B cell (primary cell): ENCODE measurements at regions of chr13 and their contacts with region 1.

Region 1: DNA sequence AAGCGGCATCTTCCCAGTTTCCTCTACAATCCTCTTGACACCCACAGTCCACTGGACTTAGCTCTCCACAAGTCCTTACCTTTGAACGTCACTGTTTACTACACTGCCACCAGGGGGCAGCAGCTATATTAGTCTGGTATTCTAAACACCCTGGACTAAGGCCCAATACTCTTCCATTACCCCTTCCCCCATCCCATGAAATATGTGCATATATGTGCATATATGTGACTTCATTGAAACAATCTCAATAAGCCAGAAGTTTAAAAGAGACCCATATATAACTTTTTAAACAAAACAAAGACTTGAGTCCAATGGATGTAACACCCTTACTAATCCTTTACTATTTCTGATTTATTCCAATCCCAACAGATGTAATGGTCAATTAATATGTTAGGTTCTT is 15.5 kb downstream of the GGACT start:
- DNase-seq: peak; percentile 77
- ATAC-seq: peak; percentile 73
- H3K4me3 ChIP-seq: no peak overlapping the region
- H3K4me3 Mint-ChIP-seq: no peak overlapping the region
- H3K27ac ChIP-seq: no peak overlapping the region
- H3K27ac Mint-ChIP-seq: no peak overlapping the region
- H3K4me1 ChIP-seq: no peaks in the 10 kb centered on the region
- H3K4me1 Mint-ChIP-seq: no peaks in the 10 kb centered on the region
- H3K27me3 ChIP-seq: no peaks in the 10 kb centered on the region
- H3K27me3 Mint-ChIP-seq: no peaks in the 10 kb centered on the region
- CTCF ChIP-seq: peak; percentile 92

Region 2: DNA sequence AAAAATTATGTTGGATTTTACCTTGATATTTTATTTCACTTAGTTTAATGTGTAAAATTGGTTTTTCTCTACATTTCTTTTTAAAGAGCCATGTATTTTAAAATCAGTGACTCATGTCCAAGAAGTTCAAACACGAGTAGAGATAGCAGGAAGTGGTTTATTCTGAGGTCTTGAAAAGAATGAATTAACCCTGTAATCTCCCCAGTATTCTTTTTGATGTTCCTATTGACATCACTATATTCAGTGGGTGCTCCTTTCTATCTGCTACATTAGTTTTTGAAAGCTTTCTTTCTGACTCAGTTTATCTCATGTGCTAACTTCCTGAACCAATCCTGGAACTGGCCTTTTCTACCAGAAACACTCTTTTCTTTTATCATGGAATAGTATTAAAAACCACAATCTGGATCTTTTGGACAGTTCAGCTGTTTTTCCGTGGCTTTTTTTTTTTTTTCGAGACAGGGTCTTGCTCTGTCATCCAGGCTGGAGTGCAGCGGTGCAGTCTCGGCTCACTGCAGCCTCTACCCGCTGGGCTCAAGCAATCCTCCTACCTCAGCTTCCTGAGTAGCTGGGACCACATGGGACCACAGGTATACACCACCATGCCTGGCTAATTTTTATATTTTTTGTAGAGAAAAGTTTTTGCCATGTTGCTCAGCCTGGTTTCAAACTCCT is 369.3 kb before region 1 on chr13:
- CTCF ChIA-PET with region 1: no interaction called
- POLR2A ChIA-PET with region 1: no interaction called
- intact Hi-C with region 1: no loop called
- DNase-seq: no peak
- ATAC-seq: no peak
- H3K4me3 ChIP-seq: no peak overlapping the region
- H3K4me3 Mint-ChIP-seq: no peak overlapping the region
- H3K27ac ChIP-seq: no peak overlapping the region
- H3K27ac Mint-ChIP-seq: no peak overlapping the region
- H3K4me1 ChIP-seq: peaks cover 10 to 12% of the 10 kb centered on the region in 2 donors
- H3K4me1 Mint-ChIP-seq: peaks cover 4% of the 10 kb centered on the region
- H3K27me3 ChIP-seq: peaks cover 0 to 3% (median 0%) of the 10 kb centered on the region in 4 experiments
- H3K27me3 Mint-ChIP-seq: no peaks in the 10 kb centered on the region
- CTCF ChIP-seq: no peak

Region 3: DNA sequence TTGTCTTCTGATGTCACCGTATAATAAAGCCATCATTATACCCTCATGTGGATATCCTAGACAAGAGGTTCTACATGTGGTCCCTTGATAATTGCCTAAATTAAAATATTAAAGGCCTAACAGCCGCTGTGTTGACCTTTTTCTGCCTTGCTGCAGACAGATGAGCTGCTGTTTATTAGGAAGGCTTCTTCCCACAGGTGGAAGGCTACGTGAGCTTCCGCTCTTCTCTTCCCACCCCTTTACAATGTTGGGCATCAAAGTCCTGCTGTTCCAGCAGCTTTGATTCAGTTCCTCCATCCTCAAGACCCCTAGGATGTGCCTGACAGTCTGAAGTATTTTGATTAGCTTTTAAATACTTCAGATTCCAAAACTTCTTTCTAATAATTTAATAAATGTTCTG is 267.1 kb before region 1 on chr13:
- CTCF ChIA-PET with region 1: no interaction called
- POLR2A ChIA-PET with region 1: no interaction called
- intact Hi-C with region 1: no loop called
- DNase-seq: no peak
- ATAC-seq: no peak
- H3K4me3 ChIP-seq: no peak overlapping the region
- H3K4me3 Mint-ChIP-seq: no peak overlapping the region
- H3K27ac ChIP-seq: no peak overlapping the region
- H3K27ac Mint-ChIP-seq: no peak overlapping the region
- H3K4me1 ChIP-seq: no peaks in the 10 kb centered on the region
- H3K4me1 Mint-ChIP-seq: no peaks in the 10 kb centered on the region
- H3K27me3 ChIP-seq: no peaks in the 10 kb centered on the region
- H3K27me3 Mint-ChIP-seq: no peaks in the 10 kb centered on the region
- CTCF ChIP-seq: no peak

Region 4: DNA sequence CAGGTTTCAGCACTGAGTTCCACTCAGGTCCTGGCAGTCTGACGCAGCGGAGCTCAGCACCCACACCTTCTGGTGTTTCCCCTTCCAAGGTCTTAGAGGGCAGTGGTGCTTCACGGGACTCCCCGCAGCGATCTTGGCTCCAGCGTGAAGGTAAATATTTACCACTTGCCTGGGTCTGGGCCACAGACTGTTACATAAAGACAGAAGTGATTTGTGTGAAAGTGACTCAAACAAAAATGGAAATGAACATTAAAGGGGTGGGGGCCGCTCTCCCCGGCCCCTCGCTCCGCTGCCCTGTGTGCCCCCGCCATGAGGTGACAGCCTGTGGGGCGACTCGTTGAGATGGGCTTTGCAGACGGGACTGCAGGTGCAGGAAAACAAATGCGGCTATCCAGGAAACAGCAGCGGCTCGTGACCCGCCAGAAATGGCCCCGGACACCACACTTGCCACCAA is 39.5 kb before region 1 on chr13:
- CTCF ChIA-PET with region 1: no interaction called
- POLR2A ChIA-PET with region 1: no interaction called
- intact Hi-C with region 1: no loop called
- DNase-seq: no peak
- ATAC-seq: peak; percentile 39
- H3K4me3 ChIP-seq: no peak overlapping the region
- H3K4me3 Mint-ChIP-seq: no peak overlapping the region
- H3K27ac ChIP-seq: no peak overlapping the region
- H3K27ac Mint-ChIP-seq: no peak overlapping the region
- H3K4me1 ChIP-seq: no peaks in the 10 kb centered on the region
- H3K4me1 Mint-ChIP-seq: no peaks in the 10 kb centered on the region
- H3K27me3 ChIP-seq: no peaks in the 10 kb centered on the region
- H3K27me3 Mint-ChIP-seq: no peaks in the 10 kb centered on the region
- CTCF ChIP-seq: no peak

Region 5: DNA sequence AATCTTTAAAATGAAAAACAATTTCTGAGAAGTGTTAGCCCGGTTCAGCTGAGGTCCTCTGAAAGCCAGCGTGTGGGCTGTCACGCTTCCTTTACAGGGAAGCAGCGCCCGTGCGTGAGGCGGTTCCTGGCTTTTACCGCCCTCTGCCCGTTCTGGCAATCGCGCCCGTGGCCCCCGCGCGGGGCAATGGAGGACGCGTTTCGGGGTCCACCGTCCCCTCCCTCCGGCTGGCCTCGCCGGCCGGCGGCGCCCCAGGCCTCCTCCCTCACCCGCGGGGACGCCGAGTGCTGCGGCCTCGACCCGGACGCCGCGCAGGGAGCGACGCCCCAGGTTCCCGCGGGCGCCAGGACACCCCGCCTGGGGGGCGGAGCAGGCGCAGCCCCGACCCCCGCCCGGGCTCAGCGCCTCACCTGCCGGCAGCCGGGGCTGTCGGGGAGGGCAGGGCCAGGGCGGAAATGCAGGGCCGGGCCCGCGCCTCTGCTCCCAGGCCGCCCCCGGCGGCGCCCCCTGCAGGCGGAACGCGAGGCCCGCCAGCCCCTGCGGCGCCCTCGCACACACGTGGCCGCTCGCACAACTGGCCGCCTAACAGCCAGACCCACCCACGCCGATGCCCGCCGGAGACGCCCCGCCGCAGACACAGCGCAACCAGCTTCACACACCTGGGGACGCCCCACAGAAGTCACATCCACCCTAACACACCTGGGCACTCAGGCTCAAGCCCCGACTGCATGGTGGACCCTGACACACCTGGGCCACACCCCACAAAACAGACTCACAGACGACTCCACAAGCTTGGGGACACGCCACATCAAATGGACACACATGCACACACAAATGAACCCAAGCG is 15.4 kb after region 1 on chr13 and contains the start of gene GGACT:
- CTCF ChIA-PET with region 1: interaction called, 46 read pairs
- POLR2A ChIA-PET with region 1: no interaction called
- intact Hi-C with region 1: no loop called
- DNase-seq: peak; percentile 84
- ATAC-seq: peak; percentile 96
- H3K4me3 ChIP-seq: peak within 1 kb of the TSS; percentile 21 to 85 (median 55)
- H3K4me3 Mint-ChIP-seq: peak within 1 kb of the TSS; percentile 90
- H3K27ac ChIP-seq: peak within 1 kb of the TSS; percentile 42 to 74
- H3K27ac Mint-ChIP-seq: peak within 1 kb of the TSS; percentile 82
- H3K4me1 ChIP-seq: peaks cover 10 to 12% of the 10 kb centered on the region in 2 donors
- H3K4me1 Mint-ChIP-seq: peaks cover 20% of the 10 kb centered on the region
- H3K27me3 ChIP-seq: no peaks in the 10 kb centered on the region
- H3K27me3 Mint-ChIP-seq: no peaks in the 10 kb centered on the region
- CTCF ChIP-seq: peak; percentile 81
- total RNA-seq, gene GGACT: 2.9 and 3.5 TPM in 2 replicates

Region 6: DNA sequence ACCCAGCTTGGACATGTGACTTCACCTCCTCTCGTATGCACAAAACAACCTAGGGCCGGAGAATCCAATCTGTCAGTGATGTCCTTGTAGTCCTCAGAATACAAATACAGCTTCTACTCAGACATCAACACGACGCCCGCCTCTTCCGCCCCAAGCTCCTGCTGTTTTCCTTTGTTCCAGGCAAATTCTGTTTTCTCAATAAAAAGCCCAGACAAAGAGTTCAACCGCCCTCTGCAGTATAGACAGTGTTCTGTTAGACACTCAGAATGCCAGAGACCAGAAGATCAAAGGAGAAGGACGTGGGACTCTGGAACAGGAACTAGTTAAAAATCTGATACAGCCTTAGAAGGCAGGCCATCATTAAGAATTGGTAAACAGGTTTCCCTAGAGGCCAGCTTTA is 57.4 kb after region 1 on chr13:
- CTCF ChIA-PET with region 1: interaction called, 11 read pairs
- POLR2A ChIA-PET with region 1: no interaction called
- intact Hi-C with region 1: no loop called
- DNase-seq: no peak
- ATAC-seq: no peak
- H3K4me3 ChIP-seq: no peak overlapping the region
- H3K4me3 Mint-ChIP-seq: no peak overlapping the region
- H3K27ac ChIP-seq: no peak overlapping the region
- H3K27ac Mint-ChIP-seq: no peak overlapping the region
- H3K4me1 ChIP-seq: no peaks in the 10 kb centered on the region
- H3K4me1 Mint-ChIP-seq: no peaks in the 10 kb centered on the region
- H3K27me3 ChIP-seq: no peaks in the 10 kb centered on the region
- H3K27me3 Mint-ChIP-seq: no peaks in the 10 kb centered on the region
- CTCF ChIP-seq: no peak

Region 7: GRCh38 chr13:101098873-101099272 is 525.8 kb after region 1 on chr13:
- CTCF ChIA-PET with region 1: interaction called, 20 read pairs
- POLR2A ChIA-PET with region 1: no interaction called
- intact Hi-C with region 1: no loop called
- DNase-seq: no peak
- ATAC-seq: no peak
- H3K4me3 ChIP-seq: no peak overlapping the region
- H3K4me3 Mint-ChIP-seq: no peak overlapping the region
- H3K27ac ChIP-seq: no peak overlapping the region
- H3K27ac Mint-ChIP-seq: no peak overlapping the region
- H3K4me1 ChIP-seq: no peaks in the 10 kb centered on the region
- H3K4me1 Mint-ChIP-seq: no peaks in the 10 kb centered on the region
- H3K27me3 ChIP-seq: peaks cover 0 to 3% (median 0%) of the 10 kb centered on the region in 4 experiments
- H3K27me3 Mint-ChIP-seq: peaks cover 6% of the 10 kb centered on the region
- CTCF ChIP-seq: no peak

Region 8: GRCh38 chr13:101127741-101128353 is 554.7 kb after region 1 on chr13:
- CTCF ChIA-PET with region 1: interaction called, 41 read pairs
- POLR2A ChIA-PET with region 1: no interaction called
- intact Hi-C with region 1: no loop called
- DNase-seq: peak; percentile 31
- ATAC-seq: no peak
- H3K4me3 ChIP-seq: no peak overlapping the region
- H3K4me3 Mint-ChIP-seq: no peak overlapping the region
- H3K27ac ChIP-seq: no peak overlapping the region
- H3K27ac Mint-ChIP-seq: no peak overlapping the region
- H3K4me1 ChIP-seq: no peaks in the 10 kb centered on the region
- H3K4me1 Mint-ChIP-seq: no peaks in the 10 kb centered on the region
- H3K27me3 ChIP-seq: no peaks in the 10 kb centered on the region
- H3K27me3 Mint-ChIP-seq: peaks cover 11% of the 10 kb centered on the region
- CTCF ChIP-seq: peak; percentile 64